ENCODE measurements at regions of chr16 and their contacts with region 1.

Region 1: DNA sequence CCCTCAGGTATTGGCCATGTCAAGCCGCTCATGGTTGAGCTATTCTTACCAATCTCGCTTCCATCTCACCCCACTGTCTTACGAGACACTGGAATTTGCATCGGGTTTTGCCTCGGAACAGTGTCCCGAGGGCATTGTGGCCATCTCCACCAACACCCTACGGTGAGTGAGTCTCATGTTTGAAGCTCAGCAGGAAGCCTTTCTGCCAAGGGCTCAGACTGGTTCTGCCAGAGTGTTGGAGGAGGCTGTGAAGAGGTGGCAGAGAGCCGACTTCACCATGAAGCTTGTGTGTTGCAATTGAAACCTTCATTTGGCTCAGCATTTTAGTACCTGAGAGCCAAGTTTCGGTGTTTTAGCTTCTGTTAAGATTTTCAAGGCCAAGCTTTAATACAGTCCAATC is 38.0 kb downstream of the SF3B3 start:
- DNase-seq: no peak
- H3K4me3 Mint-ChIP-seq: no peak overlapping the region
- H3K27ac Mint-ChIP-seq: no peak overlapping the region
- H3K4me1 Mint-ChIP-seq: peaks cover 1% of the 10 kb centered on the region
- H3K27me3 Mint-ChIP-seq: no peaks in the 10 kb centered on the region

Region 2: GRCh38 chr16:70490261-70490803 is 71.3 kb before region 1 on chr16:
- intact Hi-C with region 1: no loop called
- DNase-seq: no peak
- H3K4me3 Mint-ChIP-seq: no peak overlapping the region
- H3K27ac Mint-ChIP-seq: no peak overlapping the region
- H3K4me1 Mint-ChIP-seq: peaks cover 12% of the 10 kb centered on the region
- H3K27me3 Mint-ChIP-seq: no peaks in the 10 kb centered on the region

Region 3: GRCh38 chr16:70529051-70529777 is 32.4 kb before region 1 on chr16:
- intact Hi-C with region 1: loop called (anchors 5 kb)
- DNase-seq: no peak
- H3K4me3 Mint-ChIP-seq: peak overlapping the region; percentile 59
- H3K27ac Mint-ChIP-seq: peak overlapping the region; percentile 47
- H3K4me1 Mint-ChIP-seq: peaks cover 46% of the 10 kb centered on the region
- H3K27me3 Mint-ChIP-seq: no peaks in the 10 kb centered on the region

Region 4: DNA sequence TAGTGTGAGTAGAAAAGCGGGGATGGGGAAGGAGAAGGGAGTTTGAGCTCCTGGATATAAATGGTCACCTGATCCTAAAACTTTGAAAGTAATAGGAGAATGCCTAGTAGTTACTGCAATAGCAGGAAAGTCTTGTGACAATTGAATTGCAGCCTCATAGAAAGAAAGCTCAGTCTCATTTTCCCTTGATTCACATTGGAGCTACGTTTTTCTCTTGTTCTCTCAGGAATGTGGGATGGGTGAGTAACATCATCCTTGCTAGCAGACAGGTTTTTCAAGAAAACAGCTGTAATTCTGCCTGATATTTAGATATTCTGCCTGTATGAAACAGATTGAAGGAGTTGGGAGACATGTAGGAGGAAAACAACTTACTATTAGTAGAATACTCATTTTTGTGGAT is 12.7 kb before region 1 on chr16:
- intact Hi-C with region 1: no loop called
- DNase-seq: no peak
- H3K4me3 Mint-ChIP-seq: no peak overlapping the region
- H3K27ac Mint-ChIP-seq: no peak overlapping the region
- H3K4me1 Mint-ChIP-seq: peaks cover 14% of the 10 kb centered on the region
- H3K27me3 Mint-ChIP-seq: no peaks in the 10 kb centered on the region

Measured in activated T-helper 2 cell treated with anti-CD3 and anti-CD28 coated beads, Interferon-gamma antibody, Interleukin-2, Interleukin-4, amounts not matched to agents 10 μg/mL and 5 μg/mL and 100 μg/mL, durations not matched to agents 14 hours and 24 hours and 36 hours (primary cell).